Activated CD4-positive, alpha-beta T cell treated with anti-CD3 and anti-CD28 coated beads for 36 hours (primary cell): ENCODE measurements at regions of chr17 and their contacts with region 1.

Region 1: GRCh38 chr17:29709861-29710519 is 87.3 kb upstream of the CORO6 start:
- DNase-seq: no peak
- ATAC-seq: no peak
- H3K4me3 Mint-ChIP-seq: no peak overlapping the region
- H3K27ac Mint-ChIP-seq: no peak overlapping the region
- H3K4me1 Mint-ChIP-seq: peaks cover 69% of the 10 kb centered on the region
- H3K27me3 Mint-ChIP-seq: no peaks in the 10 kb centered on the region

Region 2: GRCh38 chr17:29549177-29549923 is 160.6 kb before region 1 on chr17:
- CTCF ChIA-PET with region 1: no interaction called
- POLR2A ChIA-PET with region 1: no interaction called
- intact Hi-C with region 1: no loop called
- DNase-seq: no peak
- ATAC-seq: peak; percentile 36
- H3K4me3 Mint-ChIP-seq: no peak overlapping the region
- H3K27ac Mint-ChIP-seq: no peak overlapping the region
- H3K4me1 Mint-ChIP-seq: no peaks in the 10 kb centered on the region
- H3K27me3 Mint-ChIP-seq: no peaks in the 10 kb centered on the region

Region 3: DNA sequence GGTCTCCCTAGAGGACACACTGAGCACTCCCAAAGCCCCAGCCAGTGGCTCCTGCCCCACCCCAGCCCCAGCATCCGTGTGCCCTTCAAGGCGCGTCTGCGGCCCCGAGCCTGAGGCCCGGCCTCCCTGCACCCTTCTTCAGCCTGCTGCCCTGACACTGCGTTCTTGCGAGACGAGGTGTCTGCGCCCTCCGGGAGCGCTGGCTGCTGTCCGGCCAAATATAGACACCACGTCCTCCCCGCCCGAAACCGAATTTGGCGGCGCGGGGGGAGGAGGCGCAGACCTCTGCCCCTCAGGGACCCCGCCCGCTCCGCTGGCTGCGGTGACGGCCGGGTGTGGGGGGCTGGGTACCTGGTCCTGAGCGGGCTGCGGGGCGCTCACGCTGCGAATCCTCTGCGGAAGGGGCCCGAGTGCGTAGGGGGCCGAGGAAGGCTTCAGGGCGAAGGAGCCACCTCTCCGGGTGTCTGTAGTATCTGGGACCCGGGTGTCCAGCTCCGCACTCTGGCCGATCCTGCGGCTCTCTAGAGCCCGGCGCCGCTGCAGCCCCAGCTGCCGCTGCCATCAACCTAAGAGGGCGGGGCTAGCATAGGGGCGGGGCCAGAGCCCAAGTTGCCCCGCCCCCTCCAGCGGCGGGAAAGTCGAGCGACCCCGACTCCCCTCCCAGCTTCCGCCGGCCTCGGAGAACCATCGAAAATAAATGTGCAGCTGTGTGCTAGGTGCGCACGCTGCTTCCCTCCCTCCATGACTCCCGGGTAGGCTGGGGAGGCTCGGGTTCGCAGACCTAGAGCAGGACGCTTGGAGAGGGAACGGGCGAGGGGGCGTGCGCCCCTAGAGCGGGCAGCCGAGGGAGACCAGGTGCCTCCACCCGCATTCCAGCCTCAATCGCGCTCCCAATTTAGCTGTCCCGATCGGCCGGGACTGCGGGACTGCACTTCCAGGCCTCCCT is 87.4 kb before region 1 on chr17 and contains the start of gene CORO6:
- CTCF ChIA-PET with region 1: interaction called, 6 read pairs
- POLR2A ChIA-PET with region 1: no interaction called
- intact Hi-C with region 1: loop called (anchors 1 to 5 kb)
- DNase-seq: peak; percentile 83
- ATAC-seq: peak; percentile 55
- H3K4me3 Mint-ChIP-seq: peak within 1 kb of the TSS; percentile 62
- H3K27ac Mint-ChIP-seq: peak within 1 kb of the TSS; percentile 91
- H3K4me1 Mint-ChIP-seq: peaks cover 52% of the 10 kb centered on the region
- H3K27me3 Mint-ChIP-seq: no peaks in the 10 kb centered on the region
- total RNA-seq, gene CORO6: 13.9 to 14.2 TPM

Region 4: GRCh38 chr17:29687596-29687995 is 22.4 kb before region 1 on chr17:
- CTCF ChIA-PET with region 1: interaction called, 25 read pairs
- POLR2A ChIA-PET with region 1: interaction called, 8 read pairs
- intact Hi-C with region 1: loop called (anchors 1 kb)
- DNase-seq: no peak
- ATAC-seq: no peak
- H3K4me3 Mint-ChIP-seq: no peak overlapping the region
- H3K27ac Mint-ChIP-seq: no peak overlapping the region
- H3K4me1 Mint-ChIP-seq: peaks cover 24% of the 10 kb centered on the region
- H3K27me3 Mint-ChIP-seq: no peaks in the 10 kb centered on the region

Region 5: GRCh38 chr17:29722411-29723198 is 12.6 kb after region 1 on chr17:
- CTCF ChIA-PET with region 1: interaction called, 22 read pairs
- POLR2A ChIA-PET with region 1: no interaction called
- intact Hi-C with region 1: loop called (anchors 1 to 2 kb)
- DNase-seq: peak; percentile 38
- ATAC-seq: peak; percentile 50
- H3K4me3 Mint-ChIP-seq: peak overlapping the region; percentile 47
- H3K27ac Mint-ChIP-seq: peak overlapping the region; percentile 82
- H3K4me1 Mint-ChIP-seq: peaks cover 78% of the 10 kb centered on the region
- H3K27me3 Mint-ChIP-seq: no peaks in the 10 kb centered on the region

Region 6: DNA sequence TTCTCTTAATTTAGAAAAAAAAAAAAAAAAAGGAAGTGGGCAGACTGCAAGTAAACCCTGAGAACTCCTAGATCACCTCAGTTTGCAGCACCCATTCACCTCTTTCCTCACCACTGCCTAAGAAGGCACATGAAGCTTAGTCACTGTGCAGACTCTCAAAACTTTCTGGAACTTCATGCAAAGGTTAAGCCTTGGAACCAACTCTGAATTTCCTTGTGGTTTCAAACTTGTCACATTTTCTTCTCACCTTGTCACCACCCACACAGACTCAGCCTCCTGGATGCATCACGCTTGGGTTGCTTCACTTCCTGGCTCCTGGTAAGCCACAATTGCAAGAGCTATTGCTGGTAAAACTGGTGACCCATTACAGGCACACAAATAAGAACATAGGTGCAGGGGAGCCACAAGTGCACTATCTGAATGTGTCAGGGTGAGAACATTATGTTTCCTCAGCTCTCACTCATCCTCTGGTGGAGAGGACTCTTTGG is 653.8 kb after region 1 on chr17:
- CTCF ChIA-PET with region 1: no interaction called
- POLR2A ChIA-PET with region 1: no interaction called
- intact Hi-C with region 1: loop called in 1 of 2 experiments (anchors 10 kb)
- DNase-seq: peak; percentile 92
- ATAC-seq: peak; percentile 96
- H3K4me3 Mint-ChIP-seq: no peak overlapping the region
- H3K27ac Mint-ChIP-seq: peak overlapping the region; percentile 85
- H3K4me1 Mint-ChIP-seq: peaks cover 33% of the 10 kb centered on the region
- H3K27me3 Mint-ChIP-seq: no peaks in the 10 kb centered on the region